Activated CD4-positive, alpha-beta memory T cell treated with anti-CD3 and anti-CD28 coated beads for 36 hours (primary cell): ENCODE measurements at regions of chr2 and their contacts with region 1.

Region 1: DNA sequence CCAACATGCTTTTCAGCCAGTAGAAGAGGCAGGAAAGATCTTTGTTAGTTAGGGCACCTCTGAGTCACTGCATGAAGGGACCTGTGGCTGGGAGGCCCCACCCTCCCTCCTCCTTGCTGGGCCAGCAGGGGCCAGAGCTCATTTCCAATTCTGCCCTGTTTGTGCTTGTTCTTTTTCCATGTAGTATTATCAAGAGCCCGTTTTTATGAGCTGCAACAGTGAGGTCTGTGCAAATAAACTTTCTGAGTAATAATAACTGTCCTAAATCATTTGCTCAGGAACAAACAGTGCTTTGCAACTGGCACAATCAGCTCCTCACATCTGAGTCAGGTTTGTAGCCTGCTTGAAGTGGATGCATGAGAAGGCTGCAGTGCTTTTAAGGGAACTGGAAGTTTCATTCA is 128.0 kb downstream of the ARL4C start:
- DNase-seq: peak; percentile 67
- H3K4me3 Mint-ChIP-seq: no peak overlapping the region
- H3K27ac Mint-ChIP-seq: peak overlapping the region; percentile 49
- H3K4me1 Mint-ChIP-seq: peaks cover 67% of the 10 kb centered on the region
- H3K27me3 Mint-ChIP-seq: no peaks in the 10 kb centered on the region

Region 2: DNA sequence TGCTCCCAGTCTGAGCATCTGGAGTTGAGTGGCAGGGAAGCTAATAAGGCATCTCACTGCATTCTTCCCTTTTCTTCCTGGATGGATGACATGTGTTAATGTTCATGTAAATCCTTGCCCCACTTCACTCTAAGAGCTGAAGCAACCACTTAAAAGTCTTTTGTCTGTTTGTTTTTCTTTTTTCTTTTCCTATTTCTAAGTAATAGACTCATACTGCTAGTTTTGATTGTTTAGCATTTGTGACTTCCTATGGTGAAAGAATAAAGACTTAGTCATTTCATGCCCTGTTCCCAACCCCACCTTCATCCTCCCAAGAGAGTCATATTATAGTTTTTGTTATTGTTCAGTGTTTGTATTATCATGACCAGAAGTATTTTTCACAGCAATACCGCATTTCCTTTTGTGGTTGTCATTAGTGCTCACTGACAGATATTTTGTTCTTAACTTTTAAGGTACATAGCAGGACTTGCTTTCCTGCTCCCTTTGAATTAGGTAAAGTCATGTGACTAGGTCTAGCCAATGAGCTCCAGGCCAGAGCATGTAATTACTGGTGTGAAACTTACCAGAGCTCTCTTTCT is 336.5 kb before region 1 on chr2:
- CTCF ChIA-PET with region 1: no interaction called
- POLR2A ChIA-PET with region 1: no interaction called
- intact Hi-C with region 1: no loop called
- DNase-seq: peak; percentile 55
- H3K4me3 Mint-ChIP-seq: no peak overlapping the region
- H3K27ac Mint-ChIP-seq: peak overlapping the region; percentile 47
- H3K4me1 Mint-ChIP-seq: peaks cover 41% of the 10 kb centered on the region
- H3K27me3 Mint-ChIP-seq: no peaks in the 10 kb centered on the region

Region 3: DNA sequence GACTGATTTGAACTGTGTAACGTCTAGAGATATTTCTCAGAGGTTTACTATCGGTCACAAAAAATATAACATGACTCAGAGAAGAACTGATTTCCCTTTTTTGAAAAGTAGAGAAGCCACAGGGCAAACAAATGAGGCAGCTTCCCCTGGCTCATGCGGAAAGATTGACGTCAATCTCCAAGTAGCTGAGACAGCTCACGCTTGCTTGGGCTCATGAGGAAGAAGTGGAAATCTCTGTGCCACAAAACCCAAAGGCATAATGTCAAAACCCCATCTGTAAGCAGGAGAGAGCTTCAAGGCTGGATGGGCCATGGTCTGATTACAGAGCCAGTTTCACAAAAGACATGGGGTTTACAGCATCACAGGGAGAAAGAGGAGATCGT is 60.1 kb before region 1 on chr2:
- CTCF ChIA-PET with region 1: no interaction called
- POLR2A ChIA-PET with region 1: no interaction called
- intact Hi-C with region 1: loop called (anchors 2 kb)
- DNase-seq: peak; percentile 88
- H3K4me3 Mint-ChIP-seq: peak overlapping the region; percentile 38
- H3K27ac Mint-ChIP-seq: peak overlapping the region; percentile 89
- H3K4me1 Mint-ChIP-seq: peaks cover 56% of the 10 kb centered on the region
- H3K27me3 Mint-ChIP-seq: no peaks in the 10 kb centered on the region